GM23248 (cell line): ENCODE measurements at regions of chr15 and their contacts with region 1.

Region 1: DNA sequence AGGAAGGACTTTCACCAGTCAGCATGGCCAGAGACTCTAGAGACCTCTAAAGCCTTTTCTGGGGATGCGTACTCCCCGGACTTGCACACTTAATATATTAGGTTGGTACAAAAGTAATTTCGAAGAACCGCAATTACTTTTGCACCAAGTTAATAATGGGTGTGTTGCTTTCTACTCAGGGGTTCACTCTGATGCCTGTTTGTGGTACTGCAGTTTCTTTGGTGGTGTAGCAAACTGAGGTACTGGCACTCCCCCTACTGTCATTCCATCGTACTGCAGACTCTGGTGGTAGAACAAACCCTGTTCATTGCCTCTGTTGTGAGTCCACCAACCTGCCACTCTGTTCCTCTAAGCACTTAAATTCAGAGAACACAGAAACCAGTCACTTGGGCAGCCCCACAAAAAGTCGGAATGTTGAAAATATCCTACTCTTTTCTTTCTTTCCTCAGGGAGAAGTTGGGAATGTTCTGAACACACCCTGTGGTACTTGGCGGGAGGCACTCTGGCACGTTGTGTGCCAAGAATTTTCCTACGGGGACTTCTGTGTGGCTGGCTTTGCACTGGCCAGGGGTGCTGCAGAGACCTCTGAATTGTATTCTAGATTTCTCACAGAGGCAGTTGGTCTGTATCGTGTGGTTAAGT is 46.3 kb downstream of the GABRG3 start:
- DNase-seq: peak; percentile 70
- H3K4me3 ChIP-seq: no peak overlapping the region
- H3K27ac ChIP-seq: no peak overlapping the region
- H3K4me1 ChIP-seq: no peaks in the 10 kb centered on the region
- H3K27me3 ChIP-seq: peaks cover 6% of the 10 kb centered on the region; the same call in 1 of the 2 replicates

Region 2: GRCh38 chr15:26615188-26615926 is 401.9 kb before region 1 on chr15:
- in situ Hi-C with region 1: no loop called
- DNase-seq: no peak
- H3K4me3 ChIP-seq: no peak overlapping the region
- H3K27ac ChIP-seq: no peak overlapping the region
- H3K4me1 ChIP-seq: no peaks in the 10 kb centered on the region
- H3K27me3 ChIP-seq: no peaks in the 10 kb centered on the region

Region 3: DNA sequence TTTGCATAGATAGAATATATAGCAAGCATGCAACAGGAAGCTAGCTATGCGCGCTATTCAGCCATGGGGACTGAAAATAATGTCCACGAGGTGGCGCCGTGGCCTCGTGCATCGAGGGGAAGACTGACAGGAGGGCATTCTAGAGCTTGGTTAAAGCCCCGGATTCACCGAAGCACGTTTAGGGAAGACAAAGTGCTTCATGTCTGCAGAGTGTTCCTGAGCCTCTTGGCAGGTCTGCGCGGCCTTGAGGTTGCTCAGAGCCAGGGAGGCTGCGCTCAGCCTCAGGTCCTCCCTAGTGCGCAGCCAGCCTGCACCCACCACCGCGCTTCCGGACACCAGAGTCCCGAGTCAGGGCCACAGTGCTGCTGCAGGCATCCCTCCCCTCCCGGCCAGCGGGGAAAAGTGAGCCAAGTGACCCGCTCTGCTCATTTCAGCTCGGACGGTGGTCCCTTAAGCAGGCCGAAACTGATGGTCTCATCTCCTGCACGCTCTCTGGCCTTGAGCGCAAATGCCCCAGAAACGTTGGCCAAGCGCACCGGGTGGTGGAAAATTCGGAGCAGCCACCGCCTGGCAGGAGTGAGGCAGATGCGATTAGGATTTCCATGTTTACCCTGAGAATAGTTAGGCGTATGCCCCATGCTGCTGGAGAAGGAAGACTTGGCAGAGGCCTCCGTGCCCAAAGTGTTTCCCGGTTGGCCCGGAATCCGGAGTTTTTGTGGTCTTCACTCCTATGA is 125.7 kb before region 1 on chr15:
- in situ Hi-C with region 1: loop called (anchors 10 kb)
- DNase-seq: peak; percentile 77
- H3K4me3 ChIP-seq: peak overlapping the region; percentile 65
- H3K27ac ChIP-seq: no peak overlapping the region
- H3K4me1 ChIP-seq: no peaks in the 10 kb centered on the region; the same call in 1 of the 2 replicates
- H3K27me3 ChIP-seq: no peaks in the 10 kb centered on the region

Region 4: DNA sequence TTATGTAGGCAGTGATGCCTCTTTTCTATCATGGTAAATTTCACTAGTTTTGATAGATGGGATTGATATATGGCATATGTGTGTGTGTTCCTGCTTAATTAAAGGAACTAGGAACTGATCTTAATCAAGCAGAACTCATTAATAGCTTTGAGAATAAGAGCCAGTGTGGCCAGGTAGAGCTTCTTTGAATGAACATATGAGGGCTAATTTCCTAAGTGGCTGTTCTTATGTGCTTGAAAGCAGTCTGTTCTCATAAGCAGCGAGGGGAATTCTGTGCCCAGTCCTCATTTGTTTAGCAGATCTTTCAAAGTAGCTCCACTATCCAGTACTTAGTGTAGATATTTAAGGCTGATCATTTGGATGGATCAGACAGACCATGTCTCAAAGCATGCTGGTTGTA is 117.9 kb after region 1 on chr15:
- in situ Hi-C with region 1: no loop called
- DNase-seq: no peak
- H3K4me3 ChIP-seq: no peak overlapping the region
- H3K27ac ChIP-seq: no peak overlapping the region
- H3K4me1 ChIP-seq: peaks cover 6% of the 10 kb centered on the region; the same call in 1 of the 2 replicates
- H3K27me3 ChIP-seq: no peaks in the 10 kb centered on the region